Gastrocnemius medialis (tissue), 4 donors: ENCODE measurements at regions of chr10 and their contacts with region 1.

Region 1: GRCh38 chr10:12195603-12196506 is at the starts of genes CDC123 and NUDT5:
- DNase-seq: peak; percentile 82 to 86
- ATAC-seq: peak; percentile 96
- H3K4me3 ChIP-seq: peak within 1 kb of the TSS; percentile 72 to 96 (median 90)
- H3K27ac ChIP-seq: peak within 1 kb of the TSS; percentile 84 to 98 (median 94)
- H3K4me1 ChIP-seq: peaks cover 22 to 26% of the 10 kb centered on the region in 2 donors
- H3K27me3 ChIP-seq: no peaks in the 10 kb centered on the region
- CTCF ChIP-seq: no peak
- POLR2A ChIP-seq: peak in 1 of 2 donors; percentile 42
- total RNA-seq, gene CDC123: 31.0 to 54.3 (median 37.9) TPM
- total RNA-seq, gene NUDT5: 5.1 to 8.2 (median 5.6) TPM

Region 2: GRCh38 chr10:12042797-12043651 is 152.8 kb before region 1 on chr10 and contains the start of gene UPF2:
- in situ Hi-C with region 1: no loop called
- intact Hi-C with region 1: loop called (anchors 1 kb)
- DNase-seq: peak; percentile 98 to 99
- ATAC-seq: peak; percentile 98 to 99
- H3K4me3 ChIP-seq: peak within 1 kb of the TSS; percentile 91 to 99 (median 96)
- H3K27ac ChIP-seq: peak within 1 kb of the TSS; percentile 94 to 96 (median 95)
- H3K4me1 ChIP-seq: peaks cover 14 to 16% of the 10 kb centered on the region in 2 donors
- H3K27me3 ChIP-seq: no peaks in the 10 kb centered on the region
- CTCF ChIP-seq: no peak
- POLR2A ChIP-seq: peak in 1 of 2 donors; percentile 51
- total RNA-seq, gene UPF2: 22.9 to 30.7 (median 26.4) TPM

Region 3: DNA sequence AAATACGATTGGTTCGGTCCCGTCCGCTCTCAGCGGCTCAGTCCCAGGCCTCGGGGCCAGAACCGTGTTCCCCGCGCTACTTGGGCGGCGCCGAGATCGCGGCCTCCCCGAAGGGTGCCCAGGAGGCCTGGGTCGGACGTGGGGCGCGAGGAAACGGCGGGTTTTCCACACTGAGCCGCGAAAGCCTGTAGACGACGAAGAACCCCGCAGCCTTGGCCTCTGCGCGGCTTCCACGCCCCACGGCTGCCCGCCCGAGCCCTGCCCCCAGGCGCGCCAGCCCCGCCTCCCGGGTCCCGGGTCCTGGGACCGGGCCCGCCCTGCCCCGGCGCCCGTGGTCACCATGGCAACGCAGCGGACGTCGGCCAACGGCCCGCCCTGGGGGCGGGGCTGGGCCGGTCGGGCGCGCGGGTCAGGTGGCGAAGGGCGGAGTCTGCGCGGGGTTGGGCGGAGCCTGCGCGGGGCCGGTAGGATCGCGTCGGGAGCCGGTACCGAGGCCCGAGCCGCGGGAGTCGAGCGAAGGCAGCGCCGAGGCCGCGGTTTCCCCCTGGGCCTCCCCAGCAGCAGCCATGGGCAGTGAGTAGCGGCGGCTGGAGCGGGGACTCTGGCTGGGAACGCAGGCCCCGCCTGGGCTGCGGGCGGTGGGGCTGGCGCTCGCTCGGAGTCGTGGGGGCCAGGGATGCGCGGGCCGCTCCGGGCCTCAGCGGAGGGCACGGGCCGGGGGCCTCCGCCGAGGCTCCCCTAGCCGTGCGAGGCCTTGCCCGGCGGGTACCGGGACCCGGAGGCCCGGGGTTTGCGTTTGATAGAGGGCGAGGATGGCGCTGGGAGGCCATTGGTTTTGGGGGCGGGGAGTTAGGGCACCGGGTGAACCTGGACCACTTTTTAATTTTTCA is 66.4 kb before region 1 on chr10 and contains the start of gene SEC61A2:
- in situ Hi-C with region 1: no loop called
- intact Hi-C with region 1: loop called (anchors 5 kb)
- DNase-seq: peak; percentile 88
- ATAC-seq: peak; percentile 93 to 96
- H3K4me3 ChIP-seq: peak within 1 kb of the TSS; percentile 68 to 96 (median 82)
- H3K27ac ChIP-seq: peak within 1 kb of the TSS; percentile 74 to 89 (median 84)
- H3K4me1 ChIP-seq: peaks cover 9 to 10% of the 10 kb centered on the region in 2 donors
- H3K27me3 ChIP-seq: no peaks in the 10 kb centered on the region
- CTCF ChIP-seq: no peak
- POLR2A ChIP-seq: peak; percentile 47 to 55
- total RNA-seq, gene SEC61A2: 6.0 to 9.4 (median 8.6) TPM

Region 4: DNA sequence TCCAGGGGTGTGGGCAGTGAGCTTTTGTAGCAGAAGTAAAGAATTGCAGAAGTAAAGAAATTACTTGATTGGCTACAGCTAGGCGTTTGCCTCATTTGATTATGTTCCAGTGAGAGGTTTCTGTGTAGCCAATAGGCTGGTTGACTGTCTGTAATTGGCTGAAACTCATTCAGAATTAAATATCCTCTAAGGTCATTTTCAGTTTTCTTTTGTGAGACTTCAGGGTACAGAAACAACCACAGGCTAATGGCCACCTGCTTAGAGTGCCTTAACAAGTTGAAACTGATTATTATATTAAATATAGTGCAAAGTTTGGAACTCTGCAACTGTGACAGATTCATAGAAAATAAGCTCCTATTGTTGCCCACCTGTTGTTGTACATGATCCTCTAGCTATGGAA is 55.8 kb before region 1 on chr10:
- in situ Hi-C with region 1: no loop called
- intact Hi-C with region 1: no loop called
- DNase-seq: no peak
- ATAC-seq: no peak
- H3K4me3 ChIP-seq: no peak overlapping the region
- H3K27ac ChIP-seq: no peak overlapping the region
- H3K4me1 ChIP-seq: no peaks in the 10 kb centered on the region
- H3K27me3 ChIP-seq: no peaks in the 10 kb centered on the region
- CTCF ChIP-seq: no peak
- POLR2A ChIP-seq: no peak

Region 5: GRCh38 chr10:12699258-12699700 is 503.4 kb after region 1 on chr10:
- in situ Hi-C with region 1: no loop called
- intact Hi-C with region 1: no loop called
- DNase-seq: no peak
- ATAC-seq: no peak
- H3K4me3 ChIP-seq: no peak overlapping the region
- H3K27ac ChIP-seq: peak overlapping the region in 2 of 4 donors; percentile 41 to 44
- H3K4me1 ChIP-seq: no peaks in the 10 kb centered on the region
- H3K27me3 ChIP-seq: no peaks in the 10 kb centered on the region
- CTCF ChIP-seq: no peak
- POLR2A ChIP-seq: no peak